ENCODE measurements at regions of chr3 and their contacts with region 1.

Region 1: DNA sequence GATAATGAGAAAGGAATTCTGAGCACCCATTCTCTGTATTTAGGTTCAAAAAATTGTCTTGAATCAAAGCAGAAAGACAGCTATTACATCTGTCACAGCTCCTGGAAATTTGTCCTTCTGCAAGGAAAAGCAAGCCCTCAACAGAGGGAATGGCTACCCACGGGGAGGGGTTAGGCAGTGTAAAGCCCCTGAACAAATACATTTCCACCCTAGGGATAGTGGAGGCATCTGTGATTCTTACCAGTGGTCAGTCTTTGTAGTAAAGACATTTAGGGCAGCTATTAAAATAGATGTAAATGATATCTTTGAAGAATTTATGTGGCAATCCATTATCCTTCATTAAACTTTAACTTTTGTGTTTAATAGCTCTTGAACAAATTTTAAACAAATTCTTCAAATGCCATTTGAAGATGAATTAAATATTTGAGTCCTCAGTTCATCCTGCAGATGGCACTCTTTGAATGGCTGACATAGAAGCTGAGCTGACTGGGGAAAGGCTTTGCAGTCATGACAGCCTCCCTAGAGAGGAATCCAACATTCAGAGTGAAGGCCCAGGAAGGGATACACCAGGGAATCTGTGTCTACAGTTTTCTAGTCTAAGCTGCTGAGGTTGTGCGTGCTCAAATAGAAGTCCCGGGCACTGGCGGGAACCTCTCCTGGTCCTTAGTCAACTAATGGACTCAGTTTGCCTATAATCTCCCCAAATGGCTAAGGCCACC is 359.7 kb upstream of the ROPN1 start:
- DNase-seq: peak; percentile 38 to 70 (median 55)
- H3K4me3 ChIP-seq: no peak overlapping the region
- H3K27ac ChIP-seq: no peak overlapping the region
- H3K4me1 ChIP-seq: no peaks in the 10 kb centered on the region
- H3K27me3 ChIP-seq: peaks cover 2 to 16% (median 6%) of the 10 kb centered on the region in 5 experiments

Region 2: DNA sequence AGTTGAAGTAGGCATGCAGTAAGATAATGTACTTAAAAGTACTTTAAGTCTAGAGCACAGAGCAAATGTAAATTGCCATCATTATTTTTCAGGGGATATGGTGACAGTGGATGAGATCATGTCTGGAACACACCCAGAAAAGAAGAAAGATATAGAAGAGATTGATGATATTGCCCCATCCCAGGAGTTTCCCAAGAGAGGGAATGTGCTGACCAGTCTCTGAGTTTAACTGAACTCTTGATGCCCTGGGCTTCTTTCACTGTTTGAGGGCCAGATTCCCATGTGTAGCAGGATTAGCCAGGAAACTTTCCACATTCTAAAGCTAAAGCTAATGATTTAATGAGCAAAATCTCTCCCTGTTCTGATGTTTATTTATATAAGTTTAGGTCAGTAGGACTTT is 11.9 kb after region 1 on chr3:
- CTCF ChIA-PET with region 1: interaction called, 11 read pairs
- POLR2A ChIA-PET with region 1: no interaction called
- DNase-seq: no peak
- H3K4me3 ChIP-seq: no peak overlapping the region
- H3K27ac ChIP-seq: no peak overlapping the region
- H3K4me1 ChIP-seq: no peaks in the 10 kb centered on the region
- H3K27me3 ChIP-seq: peaks cover 0 to 6% (median 0%) of the 10 kb centered on the region in 5 experiments

Region 3: DNA sequence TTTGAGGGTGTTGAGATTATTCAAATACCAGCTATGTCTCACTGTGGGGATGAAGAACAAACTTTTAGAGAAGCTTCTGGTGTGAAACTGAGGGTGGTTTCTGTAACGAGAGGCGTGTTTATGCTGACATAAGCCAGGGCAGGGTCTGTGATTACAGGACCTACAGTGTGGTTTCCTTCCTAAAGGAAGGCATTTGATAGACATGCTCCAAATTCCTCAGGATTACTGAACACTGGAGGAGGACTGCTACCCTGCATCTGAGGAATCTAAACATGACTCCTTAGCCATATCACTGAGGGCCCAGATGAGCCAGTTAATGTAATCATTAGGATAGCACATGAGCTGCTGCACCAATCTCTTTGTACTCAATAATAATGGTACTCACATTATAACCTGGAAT is 50.3 kb after region 1 on chr3:
- CTCF ChIA-PET with region 1: no interaction called
- POLR2A ChIA-PET with region 1: no interaction called
- DNase-seq: no peak
- H3K4me3 ChIP-seq: no peak overlapping the region
- H3K27ac ChIP-seq: no peak overlapping the region
- H3K4me1 ChIP-seq: no peaks in the 10 kb centered on the region
- H3K27me3 ChIP-seq: peaks cover 0 to 4% (median 0%) of the 10 kb centered on the region in 5 experiments

Region 4: DNA sequence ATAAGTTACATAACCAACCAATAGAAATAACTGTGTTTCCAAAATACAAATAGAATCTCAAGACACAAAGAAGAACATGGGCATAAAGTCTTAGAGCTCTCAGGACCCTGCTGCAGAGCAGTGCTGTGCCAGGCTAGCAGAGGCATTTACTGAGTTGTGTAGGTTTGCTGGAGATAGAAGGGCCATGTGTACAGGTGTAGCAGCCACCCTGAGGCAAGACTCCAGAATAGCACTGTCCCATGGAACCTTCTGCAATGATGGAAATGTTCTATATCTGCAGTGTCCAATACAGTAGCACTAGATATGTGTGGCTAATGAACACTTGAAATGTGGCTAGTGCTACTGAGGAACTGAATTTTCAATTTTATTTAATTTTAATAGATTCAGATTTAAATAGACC is 111.7 kb after region 1 on chr3:
- CTCF ChIA-PET with region 1: interaction called, 36 read pairs
- POLR2A ChIA-PET with region 1: no interaction called
- DNase-seq: no peak
- H3K4me3 ChIP-seq: no peak overlapping the region
- H3K27ac ChIP-seq: no peak overlapping the region
- H3K4me1 ChIP-seq: no peaks in the 10 kb centered on the region
- H3K27me3 ChIP-seq: peaks cover 0 to 16% (median 6%) of the 10 kb centered on the region in 5 experiments

Region 5: DNA sequence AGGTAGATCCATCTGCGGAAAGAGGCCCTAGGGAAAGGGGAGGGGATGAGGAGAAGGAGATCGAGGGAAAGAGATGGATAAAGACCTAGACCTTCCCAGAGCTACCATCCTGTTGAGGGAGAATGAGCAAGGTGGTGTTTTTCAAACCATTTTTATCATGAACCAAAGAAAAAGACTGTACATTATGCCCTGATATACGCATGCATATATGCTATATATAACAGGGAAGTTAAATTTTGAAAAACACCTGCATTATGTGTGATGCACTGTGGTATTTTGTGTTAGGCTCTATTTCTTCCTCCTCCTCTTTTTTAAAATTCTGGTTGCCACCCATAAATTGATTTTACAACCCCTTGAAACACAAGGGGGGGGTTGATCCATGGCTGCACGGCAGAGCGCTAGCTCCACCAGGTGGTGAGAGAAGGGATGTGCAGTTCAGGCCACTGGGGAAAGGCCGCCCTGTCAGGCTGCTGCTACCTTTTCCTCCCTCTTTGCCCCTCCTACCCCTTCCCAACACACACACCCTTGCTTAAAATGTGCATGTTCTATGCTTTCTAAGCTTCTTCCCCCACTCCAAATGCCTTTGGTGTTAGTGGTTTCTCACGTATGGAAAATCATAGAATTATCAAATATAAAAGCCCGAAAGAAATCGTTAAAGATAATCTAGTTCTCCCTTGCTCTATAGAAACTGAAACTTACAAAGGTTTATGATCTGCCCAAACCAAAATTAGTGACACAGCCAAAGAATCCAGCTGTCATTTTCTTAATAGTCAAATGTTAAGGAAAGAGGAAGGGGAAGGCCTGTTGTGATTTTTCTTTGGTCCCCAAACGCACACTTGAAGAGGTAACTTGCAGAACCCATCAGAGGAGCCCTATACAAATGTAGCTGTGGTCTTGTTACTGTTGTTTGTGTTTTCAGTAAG is 116.7 kb after region 1 on chr3:
- CTCF ChIA-PET with region 1: interaction called, 36 read pairs
- POLR2A ChIA-PET with region 1: no interaction called
- DNase-seq: peak; percentile 40 to 61 (median 59)
- H3K4me3 ChIP-seq: no peak overlapping the region
- H3K27ac ChIP-seq: no peak overlapping the region
- H3K4me1 ChIP-seq: peaks cover 0 to 6% (median 3%) of the 10 kb centered on the region in 4 experiments
- H3K27me3 ChIP-seq: peaks cover 0 to 16% (median 5%) of the 10 kb centered on the region in 5 experiments

Region 6: DNA sequence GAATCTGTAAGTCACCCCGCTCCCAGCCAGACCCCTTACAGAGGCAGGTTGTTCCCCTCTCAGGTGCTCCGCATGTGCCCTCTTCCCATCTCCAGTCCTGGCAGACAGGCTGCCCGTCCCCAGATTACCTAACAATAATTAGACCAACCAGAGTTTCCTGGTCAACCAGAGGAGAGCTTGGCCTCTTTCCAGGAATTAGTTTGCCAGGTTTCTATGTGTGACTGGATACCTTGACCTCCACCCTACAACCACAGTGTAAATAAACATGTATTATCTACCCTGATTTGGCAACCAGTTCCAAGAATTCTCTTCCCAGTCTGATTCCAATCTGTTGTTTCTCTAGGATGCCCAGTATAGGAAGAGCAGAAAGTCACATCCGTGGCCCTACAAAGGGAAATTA is 200.7 kb after region 1 on chr3:
- CTCF ChIA-PET with region 1: interaction called, 22 read pairs
- POLR2A ChIA-PET with region 1: interaction called, 3 read pairs
- DNase-seq: no peak
- H3K4me3 ChIP-seq: no peak overlapping the region
- H3K27ac ChIP-seq: no peak overlapping the region
- H3K4me1 ChIP-seq: peaks cover 0 to under 1% (median 0%) of the 10 kb centered on the region in 4 experiments
- H3K27me3 ChIP-seq: peaks cover 0 to 44% (median 11%) of the 10 kb centered on the region in 5 experiments

Region 7: DNA sequence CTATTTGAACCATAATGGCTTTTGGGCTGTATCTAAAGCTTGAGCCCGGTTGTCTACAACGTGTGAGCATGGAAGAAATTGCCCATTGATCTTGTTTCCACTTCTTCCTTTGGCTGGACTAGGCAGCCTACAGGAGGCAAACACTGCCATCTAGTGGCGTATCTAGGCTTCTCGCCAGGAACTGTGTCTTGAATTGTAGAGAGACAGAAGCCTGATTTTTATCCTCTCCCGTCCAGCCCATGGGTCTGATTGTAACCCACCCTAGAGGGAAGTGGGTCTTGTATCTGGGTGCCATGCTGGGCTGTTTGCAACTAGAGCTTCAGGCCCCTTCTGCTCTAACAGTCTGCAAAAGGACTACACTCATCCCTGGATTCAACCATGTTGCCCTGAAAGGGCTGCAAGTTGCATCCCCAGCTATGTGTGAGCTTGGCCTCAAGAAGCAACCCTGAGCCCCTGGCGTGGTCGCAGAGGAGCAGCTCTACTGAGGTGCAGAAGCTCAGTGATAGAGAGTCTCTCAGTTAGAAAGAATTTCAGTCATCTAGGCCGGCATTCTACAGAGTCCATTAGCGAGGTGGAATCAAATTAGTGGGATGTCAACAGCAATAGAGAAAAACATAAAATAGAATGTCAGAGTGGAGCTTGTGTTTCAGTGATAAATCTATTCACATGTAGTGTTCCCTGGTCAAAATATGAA is 208.4 kb after region 1 on chr3:
- CTCF ChIA-PET with region 1: interaction called, 16 read pairs
- POLR2A ChIA-PET with region 1: no interaction called
- DNase-seq: peak; percentile 65 to 83 (median 76)
- H3K4me3 ChIP-seq: no peak overlapping the region
- H3K27ac ChIP-seq: no peak overlapping the region
- H3K4me1 ChIP-seq: peaks cover 0 to 5% (median 2%) of the 10 kb centered on the region in 4 experiments
- H3K27me3 ChIP-seq: peaks cover 0 to 8% (median 4%) of the 10 kb centered on the region in 5 experiments

Measured in common myeloid progenitor, CD34-positive (primary cell).